ENCODE measurements at regions of chr13 and their contacts with region 1.

Region 1: DNA sequence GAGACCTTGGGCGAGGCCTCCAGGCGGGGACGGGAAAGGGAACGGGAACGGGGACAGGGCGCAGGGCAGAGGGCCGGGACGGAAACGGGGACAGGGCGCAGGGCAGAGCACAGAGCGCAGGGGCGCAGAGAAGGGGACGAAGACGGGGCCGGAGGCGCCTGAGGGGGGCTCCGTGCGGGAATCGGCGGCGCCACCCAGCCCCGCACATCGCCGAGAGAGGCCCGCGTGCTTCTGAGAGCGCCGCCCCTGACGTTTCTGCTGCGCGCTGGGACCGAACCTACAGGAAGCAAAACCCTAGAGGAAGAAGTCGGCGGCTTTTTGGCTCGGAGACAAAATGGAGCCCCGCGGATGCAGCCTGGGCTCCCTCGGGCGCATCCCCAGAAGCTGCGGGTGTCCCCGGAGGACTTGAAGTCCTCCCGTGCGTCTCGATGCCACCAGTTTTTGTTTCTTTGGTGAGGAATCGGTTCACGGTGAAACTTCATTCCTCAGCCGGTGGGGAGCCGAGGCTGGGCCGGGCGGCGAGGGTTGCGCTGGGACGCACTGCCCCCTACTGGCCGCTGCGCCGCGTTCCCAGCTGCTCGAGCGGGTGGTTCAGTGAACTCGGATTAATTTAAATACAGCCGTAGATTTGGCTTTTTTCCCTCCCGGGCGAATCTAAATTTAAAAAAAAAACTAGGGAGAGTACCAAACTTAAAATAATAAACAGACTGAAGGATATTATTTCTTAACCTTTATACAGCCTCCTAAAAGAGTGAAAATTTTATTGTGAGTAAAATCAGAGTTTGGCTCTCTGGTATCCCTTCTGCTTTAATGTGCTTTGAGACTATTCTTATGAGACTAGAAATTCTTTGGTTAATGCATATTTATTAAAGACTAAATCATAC is 350.0 kb upstream of the ARGLU1 start:
- DNase-seq: peak; percentile 91

Region 2: DNA sequence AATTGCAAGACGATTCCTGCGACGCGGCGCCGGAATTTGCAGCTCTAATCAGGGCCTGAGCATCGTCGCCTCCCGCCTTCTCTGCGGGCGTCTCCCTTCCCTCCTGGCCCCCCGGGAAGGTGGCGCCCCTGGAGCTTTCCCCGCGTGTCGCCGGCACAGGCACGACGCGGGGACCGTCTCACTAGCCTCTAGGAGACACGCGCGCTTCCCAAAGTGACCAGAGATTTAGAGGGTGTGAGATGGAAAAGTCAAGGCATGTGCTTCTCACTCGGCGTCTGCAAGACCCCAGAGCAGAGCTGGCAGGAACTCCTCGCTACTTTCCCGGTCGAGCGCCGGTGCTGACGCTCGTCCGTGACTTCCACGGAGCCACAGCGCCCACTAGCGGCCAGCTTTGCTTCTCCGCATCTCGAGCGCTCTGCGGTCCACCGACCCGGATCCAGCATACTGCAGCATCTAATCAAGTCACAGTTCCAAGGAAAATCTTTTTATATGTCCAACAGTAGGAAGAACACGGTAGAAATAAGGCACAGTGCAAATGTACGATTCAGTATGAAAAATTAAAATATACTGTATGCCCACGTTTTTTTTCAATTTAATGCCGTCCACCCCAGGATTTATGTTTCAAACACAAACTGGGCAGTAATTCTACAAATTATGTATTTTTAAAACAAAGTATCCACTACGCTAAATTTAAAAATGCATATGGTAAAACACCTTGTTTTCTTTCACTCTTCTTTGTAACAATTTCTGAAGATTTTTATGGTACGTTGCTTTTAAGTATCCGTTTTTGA is 381.5 kb before region 1 on chr13:
- intact Hi-C with region 1: loop called (anchors 2 kb)
- DNase-seq: peak; percentile 94

Region 3: GRCh38 chr13:106567474-106568298 is 350.2 kb before region 1 on chr13 and contains the start of gene ARGLU1:
- intact Hi-C with region 1: loop called (anchors 10 kb)
- DNase-seq: peak; percentile 98
- total RNA-seq, gene ARGLU1: 36.8 TPM

Region 4: DNA sequence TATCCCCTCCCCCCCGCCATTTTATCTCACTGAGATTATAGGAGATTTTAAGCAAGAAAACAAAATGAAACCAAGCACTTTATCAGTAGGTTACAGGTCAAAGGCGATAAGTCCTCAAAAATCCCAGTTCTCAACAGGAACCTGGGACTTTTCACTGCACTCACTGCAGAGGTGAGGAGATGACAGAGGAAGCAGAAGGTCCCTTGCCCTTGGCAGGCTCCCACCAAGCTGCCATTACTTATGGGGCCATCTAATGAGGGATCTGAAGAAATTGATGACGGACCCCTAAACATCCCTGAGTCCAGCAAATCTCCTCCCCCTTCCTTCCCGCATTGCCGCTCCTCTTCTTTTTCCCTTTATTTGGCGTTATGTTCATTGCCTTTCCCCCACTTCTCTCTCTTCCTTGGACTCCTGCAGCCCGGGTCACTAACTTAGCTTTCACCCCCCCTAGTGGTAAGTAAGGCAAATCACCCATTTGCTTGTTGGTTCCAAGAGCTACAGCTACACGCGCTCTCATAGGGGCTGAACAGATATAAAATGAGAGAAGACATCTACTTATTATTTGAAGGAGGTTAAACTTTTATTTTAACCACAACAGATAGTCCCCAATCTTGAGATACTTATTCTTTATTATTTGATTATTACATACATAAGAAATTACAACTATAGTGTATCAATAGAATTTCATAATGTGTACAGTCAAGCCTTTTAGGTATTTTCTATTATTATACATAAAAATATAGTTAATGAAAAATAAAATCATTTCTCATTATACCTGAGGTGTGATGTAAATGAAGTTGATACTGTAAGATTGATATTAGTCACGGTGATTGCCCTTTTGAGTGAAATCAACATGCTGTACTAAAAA is 298.0 kb before region 1 on chr13:
- intact Hi-C with region 1: loop called (anchors 10 kb)
- DNase-seq: no peak

Region 5: DNA sequence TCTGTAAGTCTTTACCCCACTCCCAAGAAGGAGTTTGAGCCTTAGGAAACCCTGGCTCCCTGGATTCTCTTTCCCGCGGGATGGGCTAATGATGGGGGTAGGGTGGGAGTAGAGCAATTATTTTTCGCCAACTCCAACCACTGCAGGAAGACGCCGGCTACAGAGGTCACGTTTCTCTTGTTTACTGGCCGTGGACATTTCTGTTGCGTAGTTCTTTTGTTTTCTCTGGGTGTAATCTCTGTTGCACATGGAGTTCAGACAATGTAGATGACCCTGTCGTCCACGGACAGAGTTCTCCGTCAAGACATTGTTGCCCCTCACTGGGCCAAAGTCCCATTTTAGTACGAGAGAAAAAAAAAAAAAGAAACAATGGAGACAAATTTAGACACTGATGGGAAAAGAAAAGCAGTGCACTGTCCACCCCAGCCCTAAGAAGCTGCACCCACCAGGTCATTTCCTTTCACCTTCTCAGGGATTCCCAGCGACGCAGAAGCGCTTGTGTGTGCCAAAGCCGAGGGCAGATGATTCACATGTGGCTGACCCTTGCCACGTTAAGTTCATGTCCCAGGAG is 216.1 kb before region 1 on chr13:
- intact Hi-C with region 1: loop called (anchors 2 kb)
- DNase-seq: no peak

Region 6: GRCh38 chr13:106756446-106756845 is 161.5 kb before region 1 on chr13:
- intact Hi-C with region 1: loop called (anchors 5 kb)
- DNase-seq: no peak

Region 7: DNA sequence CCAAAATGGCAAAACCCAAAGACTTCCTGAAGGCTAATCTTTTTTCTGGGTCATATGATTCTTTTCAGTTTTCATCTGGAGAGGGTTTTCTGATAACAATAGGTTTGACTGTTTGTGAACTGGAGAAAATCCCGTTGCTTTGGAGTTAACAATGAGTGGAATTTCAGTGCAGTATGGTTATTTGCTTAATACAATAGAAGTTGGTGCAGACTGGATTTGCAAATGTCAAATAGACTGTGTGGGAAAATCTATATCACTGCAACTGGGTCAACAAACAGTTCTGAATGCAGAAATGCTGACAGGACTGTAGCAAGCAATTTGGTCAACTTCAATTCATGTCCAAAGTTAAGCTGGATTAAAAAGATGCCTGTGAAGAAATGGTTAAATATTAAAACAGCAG is 82.4 kb before region 1 on chr13:
- intact Hi-C with region 1: no loop called
- DNase-seq: no peak

Region 8: DNA sequence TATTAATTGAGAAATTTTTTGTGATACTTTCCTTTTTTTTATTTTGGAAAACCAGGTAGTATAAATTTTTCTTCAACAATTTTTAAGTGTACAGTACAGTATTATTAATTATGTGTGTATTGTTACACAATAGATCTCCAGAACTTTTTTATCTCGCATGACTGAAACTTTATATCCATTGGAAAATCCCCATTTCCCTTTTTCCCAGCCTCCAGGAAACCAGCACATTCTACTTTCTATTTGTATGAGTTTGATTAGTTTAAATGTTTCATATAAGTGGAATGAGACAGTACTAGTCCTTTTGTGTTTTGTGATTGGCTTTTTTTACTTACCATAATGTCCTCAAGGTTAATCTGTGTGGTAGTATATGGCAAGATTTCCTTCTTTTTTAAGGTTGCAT is 49.5 kb after region 1 on chr13:
- intact Hi-C with region 1: no loop called
- DNase-seq: no peak

Region 9: DNA sequence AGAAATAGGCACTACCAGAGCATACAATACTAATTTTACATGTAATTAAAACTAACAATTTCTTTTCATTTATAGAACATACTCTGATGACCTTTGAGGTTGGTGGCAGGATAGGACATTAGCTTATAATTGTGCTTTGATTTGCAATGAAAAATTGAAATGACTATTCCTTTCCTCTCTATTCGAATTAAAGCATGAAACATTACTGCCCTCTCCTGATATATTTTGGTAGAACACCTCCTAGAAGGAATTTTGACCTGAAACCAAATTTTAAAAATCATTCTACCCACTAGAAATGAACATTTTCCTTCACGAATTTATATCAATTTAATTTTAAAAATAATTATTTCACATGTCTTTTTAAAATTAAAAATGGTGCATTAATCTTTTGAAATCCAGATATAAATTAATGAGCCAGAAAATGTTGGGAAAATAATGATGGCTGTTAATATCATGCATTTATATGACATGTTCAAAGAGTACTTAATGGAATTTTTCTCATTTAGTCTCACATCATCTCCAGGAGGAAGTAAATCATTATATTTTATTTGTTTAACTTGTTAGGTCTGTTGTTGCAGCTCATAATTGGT is 206.3 kb after region 1 on chr13:
- intact Hi-C with region 1: loop called (anchors 5 kb)
- DNase-seq: no peak

Region 10: DNA sequence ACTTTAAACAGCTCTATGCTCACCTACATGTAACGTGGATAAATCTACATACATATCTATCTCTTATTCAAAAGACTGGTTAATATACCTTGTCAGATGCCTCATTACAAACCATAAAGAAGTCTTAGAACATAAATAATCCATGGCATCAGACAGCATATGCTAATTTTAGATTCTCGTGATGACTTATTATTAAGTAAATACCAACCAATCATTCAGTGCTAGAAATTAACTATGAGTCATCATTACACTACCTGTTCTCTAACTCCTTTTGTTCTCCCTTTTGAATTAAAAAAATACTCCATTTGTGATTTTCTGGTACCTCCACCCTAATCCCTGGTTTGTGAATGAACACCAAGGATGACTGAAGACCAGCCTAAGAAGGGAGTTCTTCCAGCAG is 404.3 kb after region 1 on chr13:
- intact Hi-C with region 1: no loop called
- DNase-seq: no peak

Measured in cardiac septum (tissue), 1 donor.